IMR-90 (cell line): ENCODE measurements at regions of chr1 and their contacts with region 1.

Region 1: DNA sequence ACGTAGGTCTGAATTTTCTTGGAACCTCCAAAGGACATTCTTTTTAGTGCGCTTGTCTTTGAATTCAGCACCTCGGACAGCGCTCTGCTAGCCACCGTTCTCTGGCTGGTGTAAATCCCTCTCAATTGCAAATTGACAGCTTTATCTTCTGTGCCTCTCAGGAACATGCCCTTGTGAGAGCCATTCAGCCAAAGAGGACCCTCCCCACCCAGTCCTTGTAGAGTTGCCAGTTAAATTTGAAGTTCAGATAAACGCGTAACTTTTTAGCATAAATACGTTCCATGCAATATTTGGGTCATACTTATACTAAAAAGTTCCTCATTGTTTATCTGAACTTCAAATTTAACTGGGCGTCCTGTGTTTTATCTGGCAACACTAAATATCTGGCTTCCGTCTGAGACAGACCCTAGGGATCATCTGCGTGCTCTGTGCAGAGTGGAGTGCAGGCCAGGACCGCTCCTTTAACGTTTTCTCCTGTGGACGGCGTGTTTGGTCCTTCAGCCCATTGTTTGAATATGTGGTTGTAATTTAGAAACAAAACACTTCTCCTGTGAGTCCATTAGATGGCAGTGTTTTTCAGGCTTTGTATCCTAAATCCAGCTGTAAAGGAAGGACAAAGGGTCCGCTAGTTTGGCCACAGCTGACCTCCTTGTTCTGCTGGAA is 7.0 kb downstream of the KCNAB2 start:
- DNase-seq: peak; percentile 68
- ATAC-seq: peak; percentile 83
- H3K4me3 ChIP-seq: no peak overlapping the region
- H3K27ac ChIP-seq: no peak overlapping the region
- H3K4me1 ChIP-seq: no peaks in the 10 kb centered on the region
- H3K27me3 ChIP-seq: peaks cover 6% of the 10 kb centered on the region; the same call in 1 of the 2 replicates
- CTCF ChIP-seq: peak; percentile 60
- POLR2A ChIP-seq: no peak
- RAD21 ChIP-seq: peak; percentile 72

Region 2: GRCh38 chr1:6033986-6034749 is 18.5 kb before region 1 on chr1:
- CTCF ChIA-PET with region 1: no interaction called
- POLR2A ChIA-PET with region 1: no interaction called
- dilution Hi-C with region 1: no loop called
- in situ Hi-C with region 1: no loop called
- intact Hi-C with region 1: no loop called
- DNase-seq: peak; percentile 9
- ATAC-seq: peak; percentile 92
- H3K4me3 ChIP-seq: no peak overlapping the region
- H3K27ac ChIP-seq: no peak overlapping the region
- H3K4me1 ChIP-seq: no peaks in the 10 kb centered on the region
- H3K27me3 ChIP-seq: no peaks in the 10 kb centered on the region; the same call in 1 of the 2 replicates
- CTCF ChIP-seq: peak; percentile 52
- POLR2A ChIP-seq: no peak
- RAD21 ChIP-seq: peak; percentile 43

Region 3: GRCh38 chr1:6082430-6082971 is 29.8 kb after region 1 on chr1:
- CTCF ChIA-PET with region 1: no interaction called
- POLR2A ChIA-PET with region 1: no interaction called
- dilution Hi-C with region 1: no loop called
- in situ Hi-C with region 1: no loop called
- intact Hi-C with region 1: no loop called
- DNase-seq: no peak
- ATAC-seq: peak; percentile 35; the same call in 1 of the 2 replicates
- H3K4me3 ChIP-seq: no peak overlapping the region
- H3K27ac ChIP-seq: no peak overlapping the region
- H3K4me1 ChIP-seq: no peaks in the 10 kb centered on the region
- H3K27me3 ChIP-seq: peaks cover 29% of the 10 kb centered on the region
- CTCF ChIP-seq: peak; percentile 30; the same call in 1 of the 2 replicates
- POLR2A ChIP-seq: no peak
- RAD21 ChIP-seq: peak; percentile 31; the same call in 1 of the 2 replicates

Region 4: DNA sequence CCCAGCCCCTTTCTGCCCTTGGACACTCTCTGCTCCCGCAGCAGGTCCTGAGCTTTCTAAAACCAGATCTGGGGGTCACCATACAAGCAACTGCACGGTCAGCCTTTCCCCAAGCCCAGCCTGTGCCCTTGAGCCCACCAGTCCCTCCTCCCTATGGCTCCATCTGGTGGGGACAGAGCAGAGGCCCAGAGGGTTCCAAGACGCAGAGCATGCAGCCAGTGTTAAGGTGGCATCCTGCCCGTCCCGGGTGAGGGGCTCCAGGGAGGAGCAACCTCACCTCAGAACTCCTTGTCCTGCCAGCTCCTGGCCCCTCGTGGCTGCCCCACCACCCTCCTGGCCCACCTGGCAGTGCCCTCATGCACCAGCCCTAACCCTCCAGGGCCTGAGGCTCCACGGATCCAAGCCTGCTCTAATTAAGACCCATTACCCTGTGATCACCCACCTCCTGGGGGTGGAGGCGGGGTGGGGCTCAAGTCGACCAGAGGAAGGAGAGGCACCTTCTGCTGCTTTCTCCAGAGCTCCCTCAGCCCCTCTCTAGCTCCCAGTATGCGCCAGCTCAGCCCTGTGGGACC is 119.0 kb after region 1 on chr1:
- CTCF ChIA-PET with region 1: no interaction called
- POLR2A ChIA-PET with region 1: no interaction called
- dilution Hi-C with region 1: no loop called
- in situ Hi-C with region 1: no loop called
- intact Hi-C with region 1: loop called (anchors 5 kb)
- DNase-seq: no peak
- ATAC-seq: peak; percentile 77
- H3K4me3 ChIP-seq: no peak overlapping the region
- H3K27ac ChIP-seq: no peak overlapping the region
- H3K4me1 ChIP-seq: no peaks in the 10 kb centered on the region
- H3K27me3 ChIP-seq: peaks cover 29% of the 10 kb centered on the region; the same call in 1 of the 2 replicates
- CTCF ChIP-seq: peak; percentile 27
- POLR2A ChIP-seq: no peak
- RAD21 ChIP-seq: peak; percentile 24

Region 5: GRCh38 chr1:6185635-6186382 is 133.1 kb after region 1 on chr1:
- CTCF ChIA-PET with region 1: no interaction called
- POLR2A ChIA-PET with region 1: no interaction called
- dilution Hi-C with region 1: no loop called
- in situ Hi-C with region 1: no loop called
- intact Hi-C with region 1: loop called (anchors 1 kb)
- DNase-seq: peak; percentile 41
- ATAC-seq: peak; percentile 59
- H3K4me3 ChIP-seq: no peak overlapping the region
- H3K27ac ChIP-seq: no peak overlapping the region
- H3K4me1 ChIP-seq: peaks cover 14% of the 10 kb centered on the region
- H3K27me3 ChIP-seq: peaks cover 5% of the 10 kb centered on the region; the same call in 1 of the 2 replicates
- CTCF ChIP-seq: peak; percentile 54
- POLR2A ChIP-seq: no peak
- RAD21 ChIP-seq: peak; percentile 44

Region 6: GRCh38 chr1:6220241-6220640 is 167.6 kb after region 1 on chr1:
- CTCF ChIA-PET with region 1: no interaction called
- POLR2A ChIA-PET with region 1: interaction called, 15 read pairs
- dilution Hi-C with region 1: no loop called
- in situ Hi-C with region 1: no loop called
- intact Hi-C with region 1: no loop called
- DNase-seq: peak; percentile 49
- ATAC-seq: peak; percentile 42; the same call in 1 of the 2 replicates
- H3K4me3 ChIP-seq: no peak overlapping the region
- H3K27ac ChIP-seq: no peak overlapping the region
- H3K4me1 ChIP-seq: no peaks in the 10 kb centered on the region
- H3K27me3 ChIP-seq: no peaks in the 10 kb centered on the region
- CTCF ChIP-seq: no peak
- POLR2A ChIP-seq: no peak
- RAD21 ChIP-seq: no peak

Region 7: DNA sequence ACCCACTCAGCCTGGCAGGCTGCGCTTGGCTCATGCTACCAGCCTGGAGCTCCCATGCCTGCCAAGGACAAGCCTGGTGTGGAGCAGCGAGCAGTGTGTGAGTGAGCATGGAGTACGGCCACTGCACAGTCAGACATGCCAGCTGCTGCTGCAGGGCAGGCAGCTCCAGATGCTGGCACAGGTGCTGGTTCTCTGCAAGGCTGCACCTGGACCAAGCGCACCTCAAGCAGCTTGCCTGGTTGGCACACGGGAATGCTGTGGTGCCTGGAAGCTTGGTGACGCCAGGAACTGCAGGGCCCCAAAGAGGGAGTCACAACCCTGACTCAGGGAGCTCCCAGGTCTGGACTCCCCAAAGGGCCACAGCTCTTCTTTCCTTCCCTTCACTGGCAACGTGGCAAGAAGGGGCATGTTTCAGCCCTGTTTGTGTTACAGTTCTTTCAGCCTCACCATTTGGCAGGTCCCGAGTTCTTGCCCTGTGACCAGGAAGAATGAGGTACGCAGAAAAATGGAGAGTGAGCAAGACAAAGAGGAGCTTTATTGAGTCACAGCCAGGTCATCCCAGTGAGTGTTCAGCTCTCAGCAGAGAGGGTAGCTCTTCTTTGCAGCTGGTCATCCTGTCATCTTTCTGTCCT is 314.8 kb after region 1 on chr1:
- CTCF ChIA-PET with region 1: no interaction called
- POLR2A ChIA-PET with region 1: no interaction called
- dilution Hi-C with region 1: no loop called
- in situ Hi-C with region 1: no loop called
- intact Hi-C with region 1: no loop called
- DNase-seq: peak; percentile 51
- ATAC-seq: no peak
- H3K4me3 ChIP-seq: no peak overlapping the region
- H3K27ac ChIP-seq: no peak overlapping the region
- H3K4me1 ChIP-seq: no peaks in the 10 kb centered on the region; the same call in 1 of the 2 replicates
- H3K27me3 ChIP-seq: no peaks in the 10 kb centered on the region
- CTCF ChIP-seq: no peak
- POLR2A ChIP-seq: no peak
- RAD21 ChIP-seq: no peak